Left colon (tissue), 2 donors: ENCODE measurements at regions of chr7 and their contacts with region 1.

Region 1: DNA sequence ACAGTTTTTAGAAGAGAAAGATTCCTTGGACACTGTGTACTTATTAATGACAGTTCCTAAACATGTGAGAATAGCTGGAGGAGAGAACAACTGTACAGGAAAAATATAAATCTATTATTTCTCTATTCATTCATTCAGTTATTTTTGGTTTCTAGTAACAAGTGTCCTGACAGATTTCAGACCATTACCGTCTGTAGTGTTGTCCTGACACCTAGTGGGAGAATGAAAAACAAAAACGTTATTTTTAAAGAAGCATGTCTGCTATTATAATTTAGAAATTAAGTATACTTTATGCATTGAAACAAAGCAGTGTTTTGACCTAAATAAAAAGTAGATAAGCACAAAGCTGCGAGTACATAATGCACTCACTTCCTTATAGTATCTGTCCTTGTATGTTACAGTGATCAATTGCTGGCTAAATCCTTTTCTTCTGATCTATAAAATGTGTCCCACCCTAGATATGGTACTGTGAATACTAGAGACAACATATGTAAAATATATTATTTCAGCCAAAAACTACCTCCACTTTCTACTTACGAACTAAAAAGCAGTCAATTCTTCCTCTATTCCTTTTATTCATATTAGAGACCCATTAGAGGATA is 575.6 kb downstream of the ARL4A start:
- DNase-seq: no peak
- ATAC-seq: peak; percentile 44

Region 2: GRCh38 chr7:12524794-12525386 is 738.1 kb before region 1 on chr7:
- intact Hi-C with region 1: loop called in 1 of 2 experiments (anchors 5 kb)
- DNase-seq: no peak
- ATAC-seq: peak; percentile 50

Region 3: DNA sequence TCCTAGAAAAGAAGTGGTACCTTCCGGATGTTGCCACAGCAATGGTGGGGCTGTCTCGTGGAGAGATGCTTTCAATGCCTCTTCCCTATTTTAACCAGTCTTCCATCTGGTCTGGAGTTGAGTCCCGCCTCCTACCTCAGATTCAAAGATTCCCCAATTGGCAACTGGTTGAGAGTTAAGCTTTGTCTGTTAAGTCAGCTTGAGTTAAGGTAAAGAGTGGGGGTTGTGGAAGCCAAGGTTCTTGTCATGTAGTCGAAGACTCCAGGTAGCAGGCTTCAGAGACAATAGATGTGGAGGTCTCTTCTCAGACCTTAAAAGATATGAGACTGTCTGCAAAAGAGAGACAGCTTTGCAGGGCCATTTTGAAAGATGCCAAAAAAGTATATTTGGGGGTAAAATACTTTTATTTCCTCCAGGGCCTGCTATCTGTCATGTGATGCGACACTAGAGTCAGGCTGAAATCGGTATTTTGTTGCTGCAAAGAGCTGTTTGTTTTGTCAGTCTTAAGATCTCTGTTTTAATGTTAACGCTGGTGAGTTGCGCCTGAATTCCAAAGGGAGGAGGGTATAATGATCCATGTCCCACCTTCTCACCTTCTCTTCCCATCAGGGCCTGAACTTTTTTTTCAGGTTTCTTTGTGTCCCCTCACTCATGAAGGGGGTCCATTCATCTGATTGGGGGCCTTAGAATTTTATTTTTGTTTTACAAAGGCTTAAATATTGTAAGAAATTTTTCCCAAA is 732.9 kb before region 1 on chr7:
- intact Hi-C with region 1: loop called in 1 of 2 experiments (anchors 5 kb)
- DNase-seq: no peak
- ATAC-seq: no peak

Region 4: DNA sequence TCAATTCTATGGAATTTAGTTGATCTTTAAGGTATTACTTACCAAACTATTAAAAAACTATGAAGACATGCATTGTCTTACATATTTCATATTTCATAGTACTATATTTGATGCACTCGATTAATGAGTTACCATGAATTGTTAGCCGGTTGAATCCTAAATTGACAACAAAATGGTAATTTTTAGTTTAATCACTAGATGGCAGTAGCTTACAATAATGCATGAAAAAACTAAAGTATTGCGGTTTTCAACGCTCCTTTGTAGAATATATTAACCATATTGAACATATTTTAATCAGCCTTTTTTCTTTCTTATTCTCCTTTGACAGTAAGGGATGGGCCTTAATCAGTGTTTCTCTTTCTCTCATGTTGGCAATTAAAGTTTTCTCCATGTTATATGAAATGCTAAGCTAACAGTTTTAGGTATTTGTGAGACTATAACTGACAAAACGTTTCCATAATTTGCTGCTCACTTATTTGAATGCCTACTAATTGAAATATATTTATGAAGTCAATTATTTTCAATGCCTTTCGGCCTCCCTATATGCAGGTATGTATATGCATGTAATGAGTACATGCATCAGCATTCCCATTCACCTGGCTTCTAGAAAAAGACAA is 624.1 kb before region 1 on chr7:
- intact Hi-C with region 1: loop called in 1 of 2 experiments (anchors 10 kb)
- DNase-seq: no peak
- ATAC-seq: peak; percentile 52

Region 5: DNA sequence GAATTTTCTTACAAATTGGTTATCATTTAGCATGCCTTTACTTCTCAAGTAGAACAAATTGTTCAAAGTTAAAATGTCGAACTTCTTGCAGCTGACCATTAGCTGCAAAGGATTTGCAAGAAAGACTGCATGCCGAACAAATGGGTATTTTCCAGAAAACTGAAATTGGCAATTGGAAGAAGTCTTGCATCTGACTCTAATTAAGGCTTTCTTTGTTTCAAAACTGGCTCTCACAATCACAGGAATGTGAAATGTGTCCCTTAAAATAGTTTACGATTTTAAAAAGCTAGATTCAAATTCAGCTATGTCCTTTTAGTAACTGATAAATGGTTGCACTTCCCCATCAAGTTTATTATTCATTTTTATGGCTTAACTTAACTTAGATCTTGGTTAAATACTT is 367.7 kb before region 1 on chr7:
- intact Hi-C with region 1: no loop called
- DNase-seq: no peak
- ATAC-seq: no peak

Region 6: GRCh38 chr7:13099154-13099795 is 163.8 kb before region 1 on chr7:
- intact Hi-C with region 1: no loop called
- DNase-seq: no peak
- ATAC-seq: no peak